ENCODE measurements at regions of chr14 and their contacts with region 1.

Region 1: GRCh38 chr14:104137297-104138097 is 890 bp upstream of the KIF26A start:
- DNase-seq: peak in 4 of 5 donors; percentile 49 to 90 (median 79)
- H3K4me3 ChIP-seq: peak overlapping the region in 1 of 3 donors; percentile 25
- H3K27ac ChIP-seq: peak overlapping the region in 1 of 2 donors; percentile 37
- H3K4me1 ChIP-seq: peaks cover 0 to 5% (median 0%) of the 10 kb centered on the region in 3 donors
- H3K27me3 ChIP-seq: peaks cover 13% of the 10 kb centered on the region
- CTCF ChIP-seq: peak; percentile 92

Region 2: DNA sequence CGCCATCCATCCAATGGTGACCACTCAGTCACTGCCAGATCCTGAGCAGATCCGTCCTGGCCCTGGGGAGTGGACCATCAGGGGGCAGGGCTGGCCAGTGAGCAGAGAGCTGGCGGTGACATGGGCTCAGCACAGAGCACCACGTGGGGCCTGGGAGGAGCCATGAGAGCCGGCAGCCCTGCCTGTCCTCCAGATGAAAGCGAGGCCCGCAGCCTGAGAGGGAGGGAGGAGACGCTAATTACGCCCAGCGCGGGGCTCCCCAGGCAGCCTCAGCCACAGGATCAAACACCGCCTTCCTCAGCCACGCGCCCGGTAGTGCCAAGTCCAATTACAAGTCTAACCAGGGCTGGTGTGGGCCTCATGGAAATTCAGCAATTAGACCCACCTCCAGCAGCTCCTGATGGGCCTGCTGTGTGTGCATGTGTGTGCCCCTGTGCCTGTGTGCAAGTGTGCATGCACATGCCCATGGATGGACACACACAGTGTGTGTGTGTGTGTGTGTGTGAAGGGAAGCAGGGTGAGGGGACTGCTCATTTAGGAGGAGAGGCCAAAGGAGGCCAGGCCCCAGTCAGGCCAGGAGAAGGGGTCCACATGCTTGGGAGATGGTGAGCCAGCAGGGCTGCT is 68.9 kb after region 1 on chr14:
- intact Hi-C with region 1: no loop called
- DNase-seq: peak in 4 of 5 donors; percentile 69 to 86 (median 82)
- H3K4me3 ChIP-seq: no peak overlapping the region
- H3K27ac ChIP-seq: no peak overlapping the region
- H3K4me1 ChIP-seq: peaks cover 0 to 5% (median 0%) of the 10 kb centered on the region in 3 donors
- H3K27me3 ChIP-seq: no peaks in the 10 kb centered on the region
- CTCF ChIP-seq: no peak

Region 3: GRCh38 chr14:104563742-104564615 is 426.5 kb after region 1 on chr14:
- intact Hi-C with region 1: loop called (anchors 5 kb)
- DNase-seq: peak; percentile 78 to 93 (median 83)
- H3K4me3 ChIP-seq: no peak overlapping the region
- H3K27ac ChIP-seq: no peak overlapping the region
- H3K4me1 ChIP-seq: peaks cover 0 to 15% (median 8%) of the 10 kb centered on the region in 3 donors
- H3K27me3 ChIP-seq: no peaks in the 10 kb centered on the region
- CTCF ChIP-seq: peak; percentile 87